PC-3 (cell line): ENCODE measurements at regions of chr5 and their contacts with region 1.

Region 1: GRCh38 chr5:84113246-84114105 is 271.2 kb downstream of the EDIL3 start:
- DNase-seq: no peak
- ATAC-seq: peak; percentile 43; the same call in 1 of the 2 replicates
- H3K4me3 ChIP-seq: no peak overlapping the region
- H3K27ac ChIP-seq: no peak overlapping the region
- H3K4me1 ChIP-seq: peaks cover 21% of the 10 kb centered on the region
- H3K27me3 ChIP-seq: no peaks in the 10 kb centered on the region
- CTCF ChIP-seq: no peak

Region 2: GRCh38 chr5:84202136-84202535 is 88.7 kb after region 1 on chr5:
- CTCF ChIA-PET with region 1: no interaction called
- POLR2A ChIA-PET with region 1: no interaction called
- intact Hi-C with region 1: no loop called
- DNase-seq: no peak
- ATAC-seq: no peak
- H3K4me3 ChIP-seq: no peak overlapping the region
- H3K27ac ChIP-seq: no peak overlapping the region
- H3K4me1 ChIP-seq: no peaks in the 10 kb centered on the region
- H3K27me3 ChIP-seq: no peaks in the 10 kb centered on the region
- CTCF ChIP-seq: no peak

Region 3: GRCh38 chr5:84393969-84394368 is 280.5 kb after region 1 on chr5:
- CTCF ChIA-PET with region 1: interaction called, 10 read pairs
- POLR2A ChIA-PET with region 1: no interaction called
- intact Hi-C with region 1: no loop called
- DNase-seq: peak; percentile 89
- ATAC-seq: peak; percentile 99
- H3K4me3 ChIP-seq: no peak overlapping the region
- H3K27ac ChIP-seq: peak overlapping the region; percentile 64
- H3K4me1 ChIP-seq: peaks cover 18% of the 10 kb centered on the region
- H3K27me3 ChIP-seq: no peaks in the 10 kb centered on the region
- CTCF ChIP-seq: no peak